Activated CD4-positive, alpha-beta memory T cell treated with anti-CD3 and anti-CD28 coated beads for 36 hours (primary cell): ENCODE measurements at regions of chr17 and their contacts with region 1.

Region 1: DNA sequence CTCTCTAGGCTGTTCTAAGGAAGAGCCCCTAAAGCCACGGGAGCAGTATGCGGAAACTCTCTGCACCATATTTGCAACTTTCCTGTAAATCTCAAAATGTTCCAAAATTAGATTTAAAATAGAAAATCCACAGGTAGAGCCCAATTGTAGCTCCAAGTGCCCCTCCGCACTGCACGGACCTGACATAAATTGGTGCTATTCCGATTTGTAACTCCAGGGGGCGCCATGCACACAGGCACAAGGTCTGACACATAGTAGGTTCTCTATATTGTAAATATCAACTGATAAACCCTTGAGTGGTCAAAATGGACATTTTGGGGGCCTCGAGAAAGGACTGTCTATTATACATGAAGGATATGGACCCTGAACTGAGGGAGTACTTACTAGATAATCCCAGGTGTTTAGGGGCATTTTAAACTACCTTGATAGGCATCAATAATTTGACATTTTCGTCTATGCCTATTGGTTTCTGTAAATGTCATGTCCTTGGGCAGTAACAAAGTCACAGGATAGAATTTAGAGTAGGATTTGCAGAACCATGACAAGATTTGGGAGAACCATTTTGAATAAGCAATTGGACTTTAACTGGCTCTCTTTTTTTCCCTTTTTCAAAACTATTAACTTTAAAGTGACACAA is 36.6 kb upstream of the TMEM132E start:
- DNase-seq: peak; percentile 52
- H3K4me3 Mint-ChIP-seq: no peak overlapping the region
- H3K27ac Mint-ChIP-seq: no peak overlapping the region
- H3K4me1 Mint-ChIP-seq: no peaks in the 10 kb centered on the region
- H3K27me3 Mint-ChIP-seq: peaks cover 18% of the 10 kb centered on the region

Region 2: GRCh38 chr17:34378664-34379101 is 164.1 kb before region 1 on chr17:
- CTCF ChIA-PET with region 1: no interaction called
- POLR2A ChIA-PET with region 1: no interaction called
- intact Hi-C with region 1: no loop called
- DNase-seq: peak; percentile 43
- H3K4me3 Mint-ChIP-seq: no peak overlapping the region
- H3K27ac Mint-ChIP-seq: no peak overlapping the region
- H3K4me1 Mint-ChIP-seq: peaks cover 50% of the 10 kb centered on the region
- H3K27me3 Mint-ChIP-seq: peaks cover 26% of the 10 kb centered on the region

Region 3: DNA sequence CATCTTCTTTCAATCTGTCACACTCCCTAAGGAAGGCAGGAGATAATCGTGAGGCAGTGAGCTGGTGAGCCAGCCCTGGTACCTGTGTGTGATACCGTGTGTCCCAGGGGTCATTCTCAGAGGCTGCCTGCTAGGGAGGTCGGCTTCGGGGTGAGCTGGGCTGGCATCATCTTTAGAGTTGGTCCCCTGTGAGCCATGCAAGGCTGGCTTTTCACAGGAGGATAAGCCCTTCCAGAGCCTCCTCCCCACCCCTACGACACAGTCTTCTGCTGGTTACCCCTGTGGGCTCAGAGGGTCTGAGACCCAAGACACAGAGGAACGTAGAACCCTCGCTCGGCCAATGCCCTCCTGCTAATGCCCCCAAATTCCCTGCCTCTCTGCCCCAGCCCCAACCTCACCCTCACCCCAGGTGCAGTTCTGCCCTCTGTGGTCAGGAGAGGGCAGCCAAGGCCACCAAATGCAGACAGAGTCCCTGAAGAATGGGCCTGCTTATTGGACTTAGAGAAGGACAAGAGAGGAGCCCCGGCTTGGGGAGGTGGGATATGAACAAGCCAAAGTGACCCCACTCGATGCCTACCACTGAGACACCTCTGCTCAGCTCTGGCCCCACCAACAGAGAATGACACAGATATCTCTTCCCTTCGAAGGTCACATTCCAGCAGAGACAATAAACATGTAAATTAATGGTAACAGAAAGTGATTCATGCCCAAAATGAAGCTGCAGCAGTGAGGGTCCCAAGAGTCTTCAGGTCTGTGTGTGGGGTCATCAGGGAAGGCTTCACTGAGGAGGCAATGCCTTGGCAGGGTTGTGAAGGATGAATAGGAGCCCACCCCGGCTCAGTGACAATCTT is 99.0 kb before region 1 on chr17:
- CTCF ChIA-PET with region 1: no interaction called
- POLR2A ChIA-PET with region 1: no interaction called
- intact Hi-C with region 1: no loop called
- DNase-seq: peak; percentile 15
- H3K4me3 Mint-ChIP-seq: no peak overlapping the region
- H3K27ac Mint-ChIP-seq: no peak overlapping the region
- H3K4me1 Mint-ChIP-seq: no peaks in the 10 kb centered on the region
- H3K27me3 Mint-ChIP-seq: peaks cover 29% of the 10 kb centered on the region

Region 4: DNA sequence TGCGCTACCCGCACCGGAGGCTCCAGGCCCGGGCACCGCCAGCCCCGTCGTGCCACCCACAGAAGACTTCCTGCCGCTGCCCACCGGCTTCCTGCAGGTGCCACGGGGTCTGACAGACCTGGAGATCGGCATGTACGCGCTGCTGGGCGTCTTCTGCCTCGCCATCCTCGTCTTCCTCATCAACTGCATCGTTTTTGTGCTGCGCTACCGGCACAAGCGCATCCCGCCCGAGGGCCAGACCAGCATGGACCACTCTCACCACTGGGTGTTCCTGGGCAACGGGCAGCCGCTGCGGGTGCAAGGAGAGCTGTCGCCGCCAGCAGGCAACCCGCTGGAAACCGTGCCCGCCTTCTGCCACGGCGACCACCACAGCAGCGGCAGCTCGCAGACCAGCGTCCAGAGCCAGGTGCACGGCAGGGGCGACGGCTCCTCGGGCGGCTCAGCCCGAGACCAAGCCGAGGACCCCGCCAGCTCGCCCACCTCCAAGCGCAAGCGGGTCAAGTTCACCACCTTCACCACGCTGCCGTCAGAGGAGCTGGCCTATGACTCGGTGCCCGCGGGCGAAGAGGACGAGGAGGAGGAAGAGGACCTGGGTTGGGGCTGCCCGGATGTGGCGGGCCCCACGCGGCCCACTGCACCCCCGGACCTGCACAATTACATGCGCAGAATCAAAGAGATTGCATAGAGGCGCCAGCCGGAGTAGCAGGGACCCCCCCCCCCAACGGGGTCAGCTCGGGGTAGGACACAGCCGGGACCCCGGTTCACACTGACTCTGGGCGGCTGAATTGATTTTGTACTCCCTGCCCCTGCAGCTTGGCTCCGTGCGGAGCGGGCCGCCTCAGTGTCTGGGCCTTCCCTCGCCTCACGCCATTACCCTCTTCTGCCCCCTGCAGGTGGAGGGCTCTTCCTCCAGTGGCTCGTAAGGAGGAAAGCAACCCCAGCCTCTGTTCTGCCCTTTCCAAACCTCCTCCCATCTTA is 95.0 kb after region 1 on chr17:
- CTCF ChIA-PET with region 1: interaction called, 40 read pairs
- POLR2A ChIA-PET with region 1: no interaction called
- intact Hi-C with region 1: loop called (anchors 1 kb)
- DNase-seq: peak; percentile 87
- H3K4me3 Mint-ChIP-seq: peak overlapping the region; percentile 61
- H3K27ac Mint-ChIP-seq: no peak overlapping the region
- H3K4me1 Mint-ChIP-seq: peaks cover 8% of the 10 kb centered on the region
- H3K27me3 Mint-ChIP-seq: peaks cover 8% of the 10 kb centered on the region

Region 5: GRCh38 chr17:34892461-34893249 is 349.8 kb after region 1 on chr17:
- CTCF ChIA-PET with region 1: interaction called, 7 read pairs
- POLR2A ChIA-PET with region 1: no interaction called
- intact Hi-C with region 1: loop called (anchors 1 kb)
- DNase-seq: peak; percentile 37
- H3K4me3 Mint-ChIP-seq: no peak overlapping the region
- H3K27ac Mint-ChIP-seq: no peak overlapping the region
- H3K4me1 Mint-ChIP-seq: no peaks in the 10 kb centered on the region
- H3K27me3 Mint-ChIP-seq: peaks cover 22% of the 10 kb centered on the region